Ascending aorta (tissue), 2 donors: ENCODE measurements at regions of chr4 and their contacts with region 1.

Region 1: DNA sequence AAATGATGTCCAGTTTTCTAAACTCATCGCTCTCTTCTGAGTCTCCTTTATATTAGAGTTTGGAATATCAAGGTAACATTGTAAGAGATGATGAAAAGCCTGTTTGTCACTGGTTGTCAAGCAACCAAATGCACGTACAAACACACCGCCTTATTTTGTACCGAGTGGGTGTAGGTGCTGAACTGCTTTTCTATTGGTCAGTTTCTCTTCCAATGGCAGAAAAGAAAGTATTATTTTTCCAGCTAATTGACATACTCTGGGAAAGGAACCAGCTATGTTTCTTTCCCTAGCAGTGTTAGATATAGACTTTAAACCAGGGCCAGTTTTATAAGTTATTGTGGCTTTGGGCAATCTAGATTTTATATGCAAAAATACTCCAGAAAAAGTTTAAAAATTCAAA is 6.6 kb upstream of the PPM1K start:
- DNase-seq: peak in 1 of 2 donors; percentile 78
- H3K4me3 ChIP-seq: no peak overlapping the region
- H3K27ac ChIP-seq: peak overlapping the region; percentile 70 to 82
- H3K4me1 ChIP-seq: peaks cover 2 to 14% of the 10 kb centered on the region in 2 donors
- H3K27me3 ChIP-seq: no peaks in the 10 kb centered on the region
- CTCF ChIP-seq: no peak

Region 2: DNA sequence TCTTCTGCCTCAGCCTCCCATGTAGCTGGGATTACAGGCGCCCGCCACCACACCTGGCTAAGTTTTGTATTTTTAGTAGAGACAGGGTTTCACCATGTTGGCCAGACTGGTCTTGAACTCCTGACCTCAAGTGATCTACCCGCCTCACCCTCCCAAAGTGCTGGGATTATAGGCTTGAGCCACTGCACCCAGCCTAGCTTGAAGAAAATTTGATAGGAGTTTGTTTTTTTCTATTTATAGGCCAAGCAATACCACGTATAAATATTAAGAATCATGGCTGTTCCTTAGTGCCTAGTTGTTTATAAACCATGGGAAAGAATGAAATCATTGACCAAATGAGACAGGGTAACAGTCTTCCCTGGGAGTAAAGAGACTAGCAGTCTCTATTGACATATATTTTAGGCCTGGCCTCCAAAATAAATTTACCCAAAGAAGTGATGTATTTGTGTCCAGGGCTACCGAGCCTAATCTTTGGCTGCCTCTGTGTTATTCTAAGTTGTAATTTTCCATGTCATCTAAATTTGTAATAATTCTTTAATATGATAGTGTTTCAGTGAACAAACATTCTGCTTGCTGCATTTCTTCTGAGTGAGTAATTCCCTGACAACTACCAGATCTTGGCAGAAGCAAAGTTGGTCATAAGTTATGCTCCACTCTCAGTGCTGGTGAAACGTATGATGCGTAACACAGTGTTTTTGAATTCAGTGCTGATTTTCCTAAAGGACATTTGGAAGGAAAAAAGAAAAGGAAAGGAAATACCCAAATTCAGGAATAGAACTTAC is 273.3 kb before region 1 on chr4:
- intact Hi-C with region 1: no loop called
- DNase-seq: peak in 1 of 2 donors; percentile 76
- H3K4me3 ChIP-seq: peak overlapping the region in 1 of 2 donors; percentile 45
- H3K27ac ChIP-seq: peak overlapping the region; percentile 94 to 98
- H3K4me1 ChIP-seq: peaks cover 4 to 63% of the 10 kb centered on the region in 2 donors
- H3K27me3 ChIP-seq: no peaks in the 10 kb centered on the region
- CTCF ChIP-seq: no peak

Region 3: DNA sequence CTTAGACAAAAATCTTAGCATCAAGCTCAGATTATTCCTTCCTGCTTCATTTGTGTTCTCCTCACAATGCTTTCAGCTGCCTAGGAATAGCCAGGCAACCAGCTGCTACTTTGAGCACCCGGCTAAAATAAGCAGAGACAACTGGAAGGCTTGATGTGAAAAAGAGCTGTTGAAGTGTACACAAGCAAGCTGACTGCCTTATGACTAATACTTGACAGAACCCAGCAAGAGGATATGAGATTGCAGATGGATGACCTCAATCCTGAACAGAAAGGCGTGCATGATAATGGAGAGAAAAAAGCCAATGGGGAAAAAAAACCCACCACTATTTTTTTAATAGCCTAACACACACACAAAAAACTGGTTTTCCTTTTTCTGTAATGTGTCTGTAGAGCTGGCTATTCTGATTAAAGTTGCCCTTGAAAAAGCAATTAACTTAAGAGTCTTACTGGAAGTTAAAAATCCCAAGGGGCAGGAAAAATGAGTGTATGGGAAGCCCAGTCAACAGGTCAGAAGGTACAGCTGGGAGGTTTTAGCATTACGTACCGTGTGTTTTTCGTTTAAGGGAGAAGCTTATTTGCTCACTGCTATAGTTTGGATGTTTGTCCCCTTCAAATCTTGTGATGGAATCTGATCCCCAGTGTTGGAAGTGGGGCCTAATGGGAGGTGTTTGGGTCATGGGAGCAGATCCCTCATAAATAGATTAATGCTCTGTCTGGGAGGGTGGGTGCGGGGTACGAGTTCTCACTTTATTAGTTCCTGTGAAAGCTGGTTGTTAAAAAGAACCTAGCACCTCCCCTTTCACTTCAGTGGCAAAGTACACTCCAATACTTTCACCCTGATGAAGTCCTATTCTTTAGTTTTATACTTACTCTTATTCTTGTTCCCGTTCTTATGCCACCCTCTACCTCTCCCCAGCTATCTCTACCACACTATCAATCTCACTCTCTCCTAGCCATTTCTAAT is 50.5 kb after region 1 on chr4:
- intact Hi-C with region 1: loop called (anchors 5 kb)
- DNase-seq: peak in 1 of 2 donors; percentile 16
- H3K4me3 ChIP-seq: no peak overlapping the region
- H3K27ac ChIP-seq: peak overlapping the region in 1 of 2 donors; percentile 52
- H3K4me1 ChIP-seq: no peaks in the 10 kb centered on the region
- H3K27me3 ChIP-seq: no peaks in the 10 kb centered on the region
- CTCF ChIP-seq: no peak